Left colon (tissue), 2 donors: ENCODE measurements at regions of chr12 and their contacts with region 1.

Region 1: GRCh38 chr12:42129595-42130204 is 15.0 kb downstream of the GXYLT1 start:
- DNase-seq: no peak
- ATAC-seq: peak; percentile 75

Region 2: DNA sequence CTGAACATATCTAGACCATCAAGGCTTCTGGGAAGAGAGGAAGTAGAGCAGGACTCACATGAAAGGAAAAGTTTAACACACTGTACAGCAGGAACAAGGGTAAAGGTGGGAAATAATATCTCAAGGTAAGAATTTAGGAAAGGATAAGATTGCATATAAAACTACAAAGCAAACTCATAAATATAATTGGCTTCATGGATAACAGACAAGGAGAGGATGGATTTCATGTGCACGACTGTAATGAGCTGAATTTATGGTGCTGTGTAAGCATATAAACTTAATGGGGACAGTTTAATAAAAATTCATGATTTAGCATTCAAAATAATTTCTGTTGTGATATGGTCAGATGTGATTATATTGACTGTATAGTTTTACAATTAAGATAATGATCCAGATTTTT is 283.0 kb before region 1 on chr12:
- intact Hi-C with region 1: no loop called
- DNase-seq: no peak
- ATAC-seq: no peak

Region 3: DNA sequence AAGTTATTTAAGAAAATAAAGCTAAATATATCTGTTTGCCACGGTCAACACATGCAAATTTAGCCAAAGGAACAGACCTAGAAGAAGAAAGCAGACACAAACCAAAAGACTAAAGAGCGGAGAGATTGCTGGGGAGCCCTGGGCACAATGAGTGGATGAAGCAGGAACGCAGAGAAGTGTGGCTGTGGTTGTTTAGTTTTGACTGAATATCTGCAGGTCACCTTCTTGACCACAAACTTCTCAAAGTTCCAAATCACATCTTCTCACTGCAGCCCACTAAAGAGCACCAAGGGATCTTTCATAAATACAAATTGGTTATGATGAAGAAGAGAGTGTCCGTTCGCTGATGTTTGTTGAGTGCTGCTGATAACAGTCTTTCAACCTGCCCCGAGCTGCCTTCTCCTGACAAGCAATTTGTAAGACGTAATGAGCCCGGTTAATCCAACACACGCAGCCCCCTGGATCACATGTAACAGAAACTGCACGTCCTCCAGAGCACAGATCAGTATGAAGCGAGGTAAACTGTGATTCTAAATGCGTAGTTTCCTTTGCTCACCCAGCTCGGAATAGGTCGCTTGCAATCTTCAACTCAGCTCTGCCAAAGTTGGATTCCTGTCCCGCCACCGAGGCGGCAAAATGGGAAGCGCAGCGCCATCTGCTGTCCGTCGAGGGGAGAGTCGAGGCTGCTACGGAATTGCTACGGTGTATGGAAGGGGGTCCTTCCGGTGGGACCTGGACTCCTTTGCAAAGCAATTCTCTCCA is 105.8 kb before region 1 on chr12:
- intact Hi-C with region 1: no loop called
- DNase-seq: peak; percentile 42 to 65
- ATAC-seq: peak; percentile 74

Region 4: DNA sequence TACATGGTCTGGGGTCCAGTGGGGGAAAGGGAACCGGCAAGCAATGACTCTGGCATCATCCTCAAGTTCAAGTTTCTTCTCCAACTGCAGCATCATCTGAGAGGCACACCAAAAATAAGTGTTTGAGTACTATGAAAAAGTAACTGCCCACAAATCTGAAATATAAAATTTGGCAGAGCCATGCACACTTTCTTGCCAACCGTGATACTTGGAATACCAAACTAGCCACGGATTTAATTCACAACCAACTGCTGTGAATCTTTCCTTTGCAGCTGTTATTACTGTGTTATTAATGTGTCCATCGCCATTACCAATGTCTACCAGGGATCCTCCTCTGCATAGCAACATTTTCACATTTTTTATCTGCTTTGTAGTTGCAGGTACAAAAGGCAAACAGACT is 59.7 kb before region 1 on chr12:
- intact Hi-C with region 1: no loop called
- DNase-seq: no peak
- ATAC-seq: no peak

Region 5: DNA sequence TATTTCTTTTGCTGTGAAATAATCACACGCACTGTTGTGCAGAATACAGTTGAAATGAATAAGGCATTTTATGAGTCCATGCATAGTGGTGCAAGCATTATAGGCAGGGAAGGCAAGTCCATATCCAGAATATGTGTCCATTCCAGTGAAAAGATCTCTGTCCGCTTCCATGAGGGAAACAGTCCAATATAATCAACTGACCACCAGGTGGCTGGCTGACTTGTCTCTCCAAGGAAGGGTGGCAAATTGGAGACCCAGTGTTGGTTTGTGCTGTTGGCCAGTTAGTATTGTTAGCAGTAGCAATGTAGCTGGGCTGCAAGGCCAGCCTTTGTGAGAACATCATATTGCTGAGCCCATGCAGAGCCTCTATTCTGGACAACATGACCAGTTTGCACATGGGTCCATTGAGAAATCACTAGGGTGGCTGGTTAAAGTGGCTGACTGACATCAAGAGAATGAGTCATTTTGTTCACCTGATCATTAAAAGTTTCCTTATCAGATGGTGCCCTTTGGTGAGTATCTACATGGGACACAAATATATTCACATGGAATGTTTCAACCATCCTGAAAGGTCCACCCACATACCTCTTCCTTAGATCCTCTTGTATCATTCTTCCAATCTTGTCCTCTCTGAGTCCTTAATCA is 125.6 kb after region 1 on chr12:
- intact Hi-C with region 1: no loop called
- DNase-seq: no peak
- ATAC-seq: no peak

Region 6: GRCh38 chr12:42332301-42333285 is 202.9 kb after region 1 on chr12:
- intact Hi-C with region 1: loop called in 1 of 2 experiments (anchors 5 kb)
- DNase-seq: peak in 1 of 2 donors; percentile 25
- ATAC-seq: peak; percentile 70